Activated CD8-positive, alpha-beta T cell treated with anti-CD3 and anti-CD28 coated beads, Interleukin-2, amount 10 ng/mL, durations not matched to agents 7 days and 5 days (primary cell): ENCODE measurements at regions of chr10 and their contacts with region 1.

Region 1: GRCh38 chr10:60778214-60779029 is at the start of gene CDK1:
- DNase-seq: peak; percentile 98
- ATAC-seq: peak; percentile 97
- H3K4me3 Mint-ChIP-seq: peak within 1 kb of the TSS; percentile 98
- H3K27ac Mint-ChIP-seq: peak within 1 kb of the TSS; percentile 100
- H3K4me1 Mint-ChIP-seq: peaks cover 30% of the 10 kb centered on the region
- H3K27me3 Mint-ChIP-seq: peaks cover 9% of the 10 kb centered on the region
- total RNA-seq, gene CDK1: 131 to 147 TPM

Region 2: DNA sequence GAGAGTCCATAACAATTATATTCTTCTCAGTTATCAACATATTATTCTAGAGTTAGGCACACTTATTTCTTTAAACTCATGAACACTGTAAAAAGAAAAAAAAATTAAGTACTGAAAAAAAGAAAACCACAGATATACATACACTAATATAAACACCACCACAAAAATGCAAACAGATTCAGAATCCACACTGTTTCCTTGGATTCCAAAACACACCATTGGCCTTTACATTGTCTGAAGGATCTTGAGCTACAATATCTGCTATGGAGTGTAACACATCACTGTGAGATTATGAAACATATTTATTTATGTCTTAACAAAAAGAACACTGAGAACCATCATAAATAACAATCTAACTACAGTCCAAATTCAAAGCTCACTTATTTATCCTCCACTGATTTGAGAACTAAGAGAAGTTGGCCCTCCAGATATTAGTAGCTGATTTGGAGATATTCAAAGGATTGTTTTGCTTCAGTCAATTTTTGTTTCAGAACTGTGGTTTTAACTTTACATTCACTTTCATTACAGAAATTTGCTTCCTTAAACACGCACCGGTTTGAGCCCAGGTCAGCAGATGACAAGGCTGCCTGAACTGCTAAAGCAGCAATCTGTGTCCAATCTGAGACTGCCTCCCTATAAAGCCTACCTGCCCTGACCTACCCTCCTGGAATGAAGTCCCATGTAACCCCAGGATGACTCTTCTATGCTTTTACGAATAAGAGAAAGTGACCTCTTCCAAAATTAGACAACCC is 47.1 kb before region 1 on chr10:
- CTCF ChIA-PET with region 1: no interaction called
- POLR2A ChIA-PET with region 1: interaction called, 12 read pairs
- DNase-seq: peak; percentile 48
- ATAC-seq: peak; percentile 45
- H3K4me3 Mint-ChIP-seq: peak overlapping the region; percentile 83
- H3K27ac Mint-ChIP-seq: peak overlapping the region; percentile 78
- H3K4me1 Mint-ChIP-seq: peaks cover 53% of the 10 kb centered on the region
- H3K27me3 Mint-ChIP-seq: peaks cover 20% of the 10 kb centered on the region

Region 3: DNA sequence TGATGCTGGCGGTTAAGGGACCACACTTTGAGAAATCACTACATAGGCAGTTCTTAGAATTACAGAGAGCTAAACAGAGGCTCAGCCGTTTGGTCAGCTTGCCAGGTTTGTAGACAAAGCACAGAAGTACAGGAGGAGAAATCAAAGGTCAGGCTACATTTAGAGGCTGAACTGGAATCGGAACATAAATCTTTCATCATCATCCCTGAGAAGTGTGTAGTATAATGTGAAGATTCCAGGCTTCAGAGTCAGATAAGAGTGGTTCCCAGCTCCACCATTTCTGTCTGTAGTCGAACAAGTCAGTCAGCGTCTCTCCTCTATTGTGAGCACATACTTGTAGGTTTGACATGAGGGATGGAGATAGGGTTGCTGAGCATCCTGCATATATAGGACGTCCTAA is 18.8 kb after region 1 on chr10:
- CTCF ChIA-PET with region 1: interaction called, 7 read pairs
- POLR2A ChIA-PET with region 1: interaction called, 11 read pairs
- DNase-seq: no peak
- ATAC-seq: no peak
- H3K4me3 Mint-ChIP-seq: no peak overlapping the region
- H3K27ac Mint-ChIP-seq: no peak overlapping the region
- H3K4me1 Mint-ChIP-seq: peaks cover 6% of the 10 kb centered on the region
- H3K27me3 Mint-ChIP-seq: no peaks in the 10 kb centered on the region

Region 4: DNA sequence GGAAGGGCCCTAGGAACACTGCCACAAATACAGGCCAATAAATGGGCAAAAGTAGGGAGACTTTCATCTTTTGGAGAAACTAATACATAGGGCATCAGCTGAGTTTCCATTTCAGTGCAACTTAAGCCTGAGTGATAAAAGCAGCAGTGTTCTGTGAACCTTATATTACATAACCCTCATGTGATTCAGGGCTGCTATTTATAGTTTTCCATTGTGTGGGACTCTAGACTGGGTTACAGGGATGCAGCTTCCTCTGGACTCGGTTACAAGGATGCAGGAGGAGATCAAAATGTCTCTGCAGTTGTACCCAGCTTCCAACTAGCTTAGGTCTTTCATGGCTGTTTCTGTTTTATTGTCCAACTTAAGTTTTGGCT is 32.4 kb after region 1 on chr10:
- CTCF ChIA-PET with region 1: no interaction called
- POLR2A ChIA-PET with region 1: no interaction called
- DNase-seq: no peak
- ATAC-seq: no peak
- H3K4me3 Mint-ChIP-seq: no peak overlapping the region
- H3K27ac Mint-ChIP-seq: no peak overlapping the region
- H3K4me1 Mint-ChIP-seq: no peaks in the 10 kb centered on the region
- H3K27me3 Mint-ChIP-seq: no peaks in the 10 kb centered on the region

Region 5: GRCh38 chr10:60853107-60853506 is 74.7 kb after region 1 on chr10:
- CTCF ChIA-PET with region 1: no interaction called
- POLR2A ChIA-PET with region 1: no interaction called
- DNase-seq: no peak
- ATAC-seq: no peak
- H3K4me3 Mint-ChIP-seq: no peak overlapping the region
- H3K27ac Mint-ChIP-seq: no peak overlapping the region
- H3K4me1 Mint-ChIP-seq: no peaks in the 10 kb centered on the region
- H3K27me3 Mint-ChIP-seq: no peaks in the 10 kb centered on the region

Region 6: GRCh38 chr10:60910543-60910942 is 132.1 kb after region 1 on chr10:
- CTCF ChIA-PET with region 1: no interaction called
- POLR2A ChIA-PET with region 1: no interaction called
- DNase-seq: no peak
- ATAC-seq: peak; percentile 44
- H3K4me3 Mint-ChIP-seq: no peak overlapping the region
- H3K27ac Mint-ChIP-seq: no peak overlapping the region
- H3K4me1 Mint-ChIP-seq: peaks cover 10% of the 10 kb centered on the region
- H3K27me3 Mint-ChIP-seq: peaks cover 5% of the 10 kb centered on the region

Region 7: DNA sequence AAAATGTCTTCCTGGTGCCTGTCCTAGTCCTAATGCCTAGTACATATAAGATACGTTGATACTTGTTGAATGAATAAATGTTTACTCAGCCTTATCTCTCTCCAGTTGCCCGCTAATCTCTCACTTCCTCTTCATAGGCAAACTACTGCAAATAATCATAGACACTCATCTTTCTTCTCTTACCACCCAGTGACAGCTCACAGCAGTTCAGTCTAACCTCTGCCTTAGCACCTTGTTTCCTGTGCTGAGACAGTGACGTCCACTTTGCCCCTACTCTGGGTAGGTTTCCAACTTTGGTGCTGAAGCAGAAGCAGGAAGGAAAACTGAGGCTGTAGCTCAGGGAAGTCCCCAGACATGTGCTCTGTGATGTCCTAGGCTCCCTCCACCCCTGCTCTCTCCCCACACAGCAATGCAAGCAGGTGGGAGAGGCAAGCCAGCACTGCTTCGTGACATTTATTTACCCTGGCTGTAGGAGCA is 211.0 kb after region 1 on chr10:
- CTCF ChIA-PET with region 1: no interaction called
- POLR2A ChIA-PET with region 1: no interaction called
- DNase-seq: no peak
- ATAC-seq: no peak
- H3K4me3 Mint-ChIP-seq: no peak overlapping the region
- H3K27ac Mint-ChIP-seq: no peak overlapping the region
- H3K4me1 Mint-ChIP-seq: no peaks in the 10 kb centered on the region
- H3K27me3 Mint-ChIP-seq: peaks cover 5% of the 10 kb centered on the region